ENCODE measurements at regions of chr1 and their contacts with region 1.

Region 1: DNA sequence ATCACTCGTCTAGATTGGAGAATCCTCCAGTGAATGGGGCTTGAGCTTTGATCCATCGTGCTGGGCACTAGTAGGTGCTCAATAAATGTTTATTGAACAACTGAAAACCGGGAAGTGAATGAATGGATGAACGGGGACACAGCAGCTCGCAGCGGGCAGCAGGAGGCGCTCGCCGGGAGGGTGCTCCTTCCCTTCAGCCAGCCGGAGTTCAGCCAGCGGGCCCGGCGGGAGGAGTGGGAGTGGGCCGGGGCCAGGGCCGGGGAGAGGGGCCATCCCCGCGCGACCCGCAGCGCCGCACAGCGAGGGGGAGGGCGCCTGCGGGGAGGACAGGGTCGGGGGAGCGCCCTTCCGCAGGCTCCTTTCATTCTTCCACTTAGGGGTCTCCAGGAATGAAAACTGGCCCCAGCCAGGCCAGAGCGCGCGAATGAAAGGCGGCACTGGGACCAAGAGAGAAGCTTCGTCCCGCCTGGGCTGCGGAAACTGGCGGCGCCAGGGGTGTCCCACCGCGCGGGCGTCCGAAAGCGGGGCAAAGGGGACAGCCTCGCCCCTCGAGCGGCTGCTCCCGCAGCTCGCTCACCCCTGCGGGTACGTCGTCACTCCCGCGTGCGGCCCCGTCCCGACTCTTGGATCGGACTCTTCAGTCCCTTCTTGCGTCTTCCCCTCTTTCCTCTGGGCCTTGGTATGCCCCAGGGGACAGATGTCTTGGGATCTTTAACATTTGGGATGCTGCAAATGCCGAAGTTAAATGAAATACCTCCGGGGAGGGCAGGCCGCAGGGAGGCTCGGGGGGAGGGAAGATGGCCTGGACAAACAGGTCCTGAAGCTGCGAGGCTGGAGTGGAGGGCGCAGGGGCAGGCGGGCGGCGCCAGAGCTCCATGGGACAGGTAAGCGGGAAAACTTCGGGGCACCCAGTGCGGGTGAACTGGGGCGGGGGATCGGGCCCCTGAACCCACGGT is 3.6 kb upstream of the INAVA start:
- DNase-seq: peak; percentile 88
- H3K4me3 ChIP-seq: peak overlapping the region; percentile 58 to 70
- H3K27ac ChIP-seq: no peak overlapping the region
- H3K4me1 ChIP-seq: peaks cover 0 to 3% of the 10 kb centered on the region in 2 experiments; a peak in 1 of 4 replicates
- H3K27me3 ChIP-seq: no peaks in the 10 kb centered on the region
- CTCF ChIP-seq: peak; percentile 70
- EP300 ChIP-seq: peak in 1 of 2 experiments; percentile 29; a peak in 1 of 4 replicates
- RAD21 ChIP-seq: peak; percentile 39

Region 2: DNA sequence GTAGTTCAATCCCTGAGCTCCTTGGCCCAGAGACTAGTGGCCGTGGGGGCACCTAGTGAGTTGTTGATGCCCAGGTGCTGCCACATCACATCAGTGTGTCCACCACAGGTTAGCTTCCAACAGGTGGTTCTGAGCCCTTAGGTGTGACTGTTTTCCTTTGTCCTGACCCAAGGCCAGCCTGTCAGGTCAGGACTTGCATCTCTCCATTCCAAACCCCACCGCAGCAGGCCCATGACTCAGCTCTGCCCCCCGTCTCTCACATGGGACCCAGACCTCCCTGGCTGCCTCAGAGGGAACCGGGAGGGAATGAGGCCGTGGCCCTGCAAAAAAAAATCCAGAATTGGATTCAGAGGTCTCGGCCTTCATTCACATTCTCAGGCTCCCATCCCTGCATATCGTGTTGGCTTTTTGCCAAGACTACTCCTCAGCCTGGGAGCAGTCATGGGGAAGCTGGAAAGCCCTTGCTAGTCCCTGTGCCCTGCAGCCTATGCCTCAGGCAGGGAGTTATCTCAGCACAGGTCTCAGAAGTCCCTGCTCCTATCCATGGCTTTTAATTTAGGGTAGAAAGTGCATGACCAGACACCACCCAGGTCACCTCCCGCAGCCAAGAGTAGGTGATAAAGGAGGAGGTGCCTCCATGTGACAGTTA is 10.8 kb after region 1 on chr1:
- CTCF ChIA-PET with region 1: interaction called, 15 read pairs
- POLR2A ChIA-PET with region 1: no interaction called
- DNase-seq: peak; percentile 54
- H3K4me3 ChIP-seq: no peak overlapping the region
- H3K27ac ChIP-seq: no peak overlapping the region
- H3K4me1 ChIP-seq: no peaks in the 10 kb centered on the region; a peak in 1 of 4 replicates
- H3K27me3 ChIP-seq: no peaks in the 10 kb centered on the region
- CTCF ChIP-seq: no peak
- EP300 ChIP-seq: no peak
- RAD21 ChIP-seq: no peak

Measured in SK-N-SH (cell line).